ENCODE measurements at regions of chr13 and their contacts with region 1.

Region 1: GRCh38 chr13:48094781-48095502 is at the start of gene MED4:
- DNase-seq: peak; percentile 95
- H3K4me3 ChIP-seq: peak within 1 kb of the TSS; percentile 84 to 95 (median 86)
- H3K27ac ChIP-seq: peak within 1 kb of the TSS; percentile 60
- H3K4me1 ChIP-seq: peaks cover 10% of the 10 kb centered on the region
- H3K27me3 ChIP-seq: peaks cover 5% of the 10 kb centered on the region in 2 experiments
- CTCF ChIP-seq: peak; percentile 100
- POLR2A ChIP-seq: peak; percentile 91
- total RNA-seq, gene MED4: 40.1 and 43.3 TPM in 2 replicates

Region 2: DNA sequence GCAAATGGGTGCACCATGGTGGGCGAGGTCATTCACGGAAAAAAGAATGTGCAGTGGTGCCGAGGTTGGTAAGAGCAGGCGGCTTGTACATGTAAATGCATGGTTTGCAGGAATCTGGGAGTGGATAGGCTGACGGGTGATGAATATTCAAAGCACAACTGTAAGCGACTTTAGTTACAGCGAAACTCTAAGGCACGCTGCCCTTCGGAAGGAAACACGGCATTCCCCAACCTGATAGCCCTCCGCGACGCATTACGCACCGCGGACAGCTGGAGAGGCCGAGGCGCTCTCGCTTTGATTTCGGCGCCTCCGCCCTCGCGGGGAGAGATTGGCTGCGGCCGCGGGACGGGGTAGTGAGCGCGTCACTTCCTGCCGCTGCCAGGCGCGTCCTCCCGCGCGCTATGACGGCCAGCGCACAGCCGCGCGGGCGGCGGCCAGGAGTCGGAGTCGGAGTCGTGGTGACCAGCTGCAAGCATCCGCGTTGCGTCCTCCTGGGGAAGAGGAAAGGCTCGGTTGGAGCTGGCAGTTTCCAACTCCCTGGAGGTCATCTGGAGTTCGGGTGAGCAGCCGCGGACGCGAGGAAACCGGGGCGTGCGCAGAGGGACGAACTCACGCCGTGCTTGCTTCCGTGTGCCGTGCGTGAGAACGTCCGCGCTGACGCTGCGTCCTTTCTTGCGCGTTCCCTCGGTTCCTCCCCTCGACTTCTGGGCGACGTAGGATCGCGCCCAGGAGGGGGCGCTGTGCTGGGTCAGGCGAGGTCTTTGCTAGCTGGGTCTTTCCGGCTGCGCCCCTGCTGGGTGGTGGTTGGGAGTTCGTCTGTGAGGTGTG is 57.4 kb before region 1 on chr13 and contains the start of gene NUDT15:
- CTCF ChIA-PET with region 1: interaction called, 13 read pairs
- POLR2A ChIA-PET with region 1: no interaction called
- dilution Hi-C with region 1: no loop called
- intact Hi-C with region 1: loop called (anchors 1 kb)
- DNase-seq: peak; percentile 96
- H3K4me3 ChIP-seq: peak within 1 kb of the TSS; percentile 54 to 75 (median 72)
- H3K27ac ChIP-seq: peak within 1 kb of the TSS; percentile 82
- H3K4me1 ChIP-seq: peaks cover 16% of the 10 kb centered on the region
- H3K27me3 ChIP-seq: no peaks in the 10 kb centered on the region
- CTCF ChIP-seq: peak; percentile 100
- POLR2A ChIP-seq: peak; percentile 95
- total RNA-seq, gene NUDT15: 20.6 and 21.6 TPM in 2 replicates

Region 3: DNA sequence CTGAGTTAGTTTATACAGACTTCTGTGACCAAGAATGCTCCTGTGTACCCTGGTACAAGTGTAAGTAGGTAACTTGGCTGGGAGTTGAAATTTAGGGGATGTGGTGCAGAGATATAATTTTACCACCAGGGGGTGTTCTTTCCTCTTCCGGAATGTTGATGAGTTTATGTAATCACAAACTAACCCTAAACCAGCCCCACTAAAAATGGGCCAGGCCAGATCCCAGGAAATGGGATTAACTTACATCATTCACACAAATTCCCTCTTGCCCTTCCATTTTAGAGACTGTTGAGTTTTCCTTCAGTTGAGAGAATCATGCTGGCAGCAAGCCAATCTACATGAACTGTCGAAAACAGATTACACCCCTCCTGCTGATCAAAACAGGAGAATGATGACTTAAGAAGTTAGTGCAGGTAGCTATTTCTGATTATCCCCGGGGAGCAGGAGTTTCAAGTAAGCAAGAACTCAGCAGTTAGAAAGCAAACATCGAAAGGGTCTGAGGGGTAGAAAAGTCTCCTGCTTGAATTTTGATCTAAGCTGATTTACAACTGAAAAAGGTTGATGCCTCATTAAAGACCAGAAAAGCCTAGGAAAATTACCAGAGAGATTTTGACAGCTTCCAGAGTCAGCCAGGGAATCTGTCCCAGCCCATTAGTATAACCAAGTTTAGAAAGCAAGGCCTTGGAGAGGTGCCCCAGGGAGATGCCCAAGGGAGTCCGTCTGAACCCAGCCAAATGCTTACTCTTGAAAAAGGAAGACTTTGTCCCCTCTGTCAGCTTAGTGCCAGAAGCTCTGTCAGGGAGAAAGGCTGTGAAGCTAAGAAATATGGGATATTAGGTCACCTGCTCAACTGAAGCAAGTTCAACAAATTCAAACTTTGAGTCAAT is 32.2 kb after region 1 on chr13:
- CTCF ChIA-PET with region 1: interaction called, 6 read pairs
- POLR2A ChIA-PET with region 1: no interaction called
- dilution Hi-C with region 1: no loop called
- intact Hi-C with region 1: loop called (anchors 2 kb)
- DNase-seq: peak; percentile 66
- H3K4me3 ChIP-seq: no peak overlapping the region
- H3K27ac ChIP-seq: no peak overlapping the region
- H3K4me1 ChIP-seq: peaks cover 15% of the 10 kb centered on the region
- H3K27me3 ChIP-seq: peaks cover 0 to under 1% of the 10 kb centered on the region in 2 experiments
- CTCF ChIP-seq: peak; percentile 58 to 62
- POLR2A ChIP-seq: no peak